Activated CD8-positive, alpha-beta T cell treated with anti-CD3 and anti-CD28 coated beads for 36 hours (primary cell): ENCODE measurements at regions of chr10 and their contacts with region 1.

Region 1: DNA sequence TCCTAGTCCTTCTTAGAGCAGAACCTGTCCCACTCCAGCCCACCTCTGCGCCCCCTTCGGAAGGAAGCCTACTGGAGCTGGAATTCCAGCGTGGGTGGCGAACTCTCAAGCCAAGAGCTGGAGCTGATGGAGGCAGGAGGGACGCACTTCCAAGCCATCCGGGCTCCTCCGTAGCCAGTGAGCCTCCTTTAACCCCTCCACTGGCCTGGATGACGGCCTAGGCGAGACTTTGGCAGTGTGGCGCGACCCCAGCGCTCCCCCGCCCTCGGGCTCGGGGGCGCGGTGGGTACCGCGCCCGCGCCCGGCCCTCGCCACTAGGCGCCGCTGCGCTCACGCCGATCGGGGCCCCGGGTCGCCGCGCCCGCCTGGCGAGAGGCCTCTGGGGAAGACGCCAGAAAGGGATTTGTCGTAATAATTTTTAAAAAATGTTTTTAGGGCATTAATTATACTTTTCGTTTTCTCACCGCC is 5.1 kb upstream of the EMX2 start:
- DNase-seq: no peak
- ATAC-seq: no peak
- H3K4me3 Mint-ChIP-seq: no peak overlapping the region
- H3K27ac Mint-ChIP-seq: no peak overlapping the region
- H3K4me1 Mint-ChIP-seq: peaks cover 11% of the 10 kb centered on the region
- H3K27me3 Mint-ChIP-seq: peaks cover 66% of the 10 kb centered on the region
- CTCF ChIP-seq: peak; percentile 79

Region 2: DNA sequence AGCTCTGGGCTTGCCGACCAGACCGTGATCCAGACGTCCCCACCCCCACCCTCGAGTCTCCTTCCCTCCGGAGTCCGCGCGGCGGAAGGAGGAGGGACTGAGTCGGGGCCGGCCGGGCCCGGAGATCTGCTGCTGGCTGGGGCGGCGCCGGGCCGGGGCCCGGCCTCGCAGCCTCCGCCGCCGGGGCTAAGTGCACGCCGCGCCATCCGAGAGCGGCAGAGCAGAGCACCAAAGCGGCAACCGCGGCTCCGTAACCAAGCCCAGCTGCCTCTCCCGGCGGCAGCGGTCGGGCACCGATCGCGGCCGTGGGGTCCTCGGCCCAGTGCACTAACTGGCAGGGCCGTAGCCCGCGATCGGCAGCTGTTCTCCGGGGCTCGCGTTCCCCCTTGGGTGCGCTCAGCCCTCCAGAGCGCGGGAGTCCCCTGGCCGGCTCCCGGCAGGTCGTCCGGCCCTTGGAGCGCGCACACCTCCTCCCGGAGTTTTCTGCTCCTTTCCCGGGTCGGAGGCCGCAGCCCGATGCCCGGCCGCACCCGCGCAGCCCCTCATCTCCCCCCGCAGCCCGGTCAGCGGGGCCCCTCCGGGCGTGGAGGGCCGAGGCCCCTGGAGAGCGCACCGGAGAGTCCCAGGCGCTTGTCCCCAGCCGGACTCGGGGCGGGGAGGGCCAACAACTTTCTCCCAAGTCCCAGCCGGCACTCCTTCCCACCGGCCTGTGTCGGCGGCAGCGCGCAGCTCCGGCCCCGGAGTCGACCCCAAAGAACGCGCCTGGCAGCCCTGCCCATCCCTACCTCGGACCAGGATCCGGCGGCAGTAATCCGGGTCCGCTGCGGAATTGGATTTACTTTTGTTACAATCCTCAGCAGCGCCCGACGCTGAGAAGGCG is 400.2 kb before region 1 on chr10:
- CTCF ChIA-PET with region 1: no interaction called
- POLR2A ChIA-PET with region 1: no interaction called
- intact Hi-C with region 1: loop called (anchors 10 kb)
- DNase-seq: peak; percentile 14
- ATAC-seq: peak; percentile 17
- H3K4me3 Mint-ChIP-seq: no peak overlapping the region
- H3K27ac Mint-ChIP-seq: no peak overlapping the region
- H3K4me1 Mint-ChIP-seq: peaks cover 16% of the 10 kb centered on the region
- H3K27me3 Mint-ChIP-seq: peaks cover 66% of the 10 kb centered on the region
- CTCF ChIP-seq: no peak

Region 3: DNA sequence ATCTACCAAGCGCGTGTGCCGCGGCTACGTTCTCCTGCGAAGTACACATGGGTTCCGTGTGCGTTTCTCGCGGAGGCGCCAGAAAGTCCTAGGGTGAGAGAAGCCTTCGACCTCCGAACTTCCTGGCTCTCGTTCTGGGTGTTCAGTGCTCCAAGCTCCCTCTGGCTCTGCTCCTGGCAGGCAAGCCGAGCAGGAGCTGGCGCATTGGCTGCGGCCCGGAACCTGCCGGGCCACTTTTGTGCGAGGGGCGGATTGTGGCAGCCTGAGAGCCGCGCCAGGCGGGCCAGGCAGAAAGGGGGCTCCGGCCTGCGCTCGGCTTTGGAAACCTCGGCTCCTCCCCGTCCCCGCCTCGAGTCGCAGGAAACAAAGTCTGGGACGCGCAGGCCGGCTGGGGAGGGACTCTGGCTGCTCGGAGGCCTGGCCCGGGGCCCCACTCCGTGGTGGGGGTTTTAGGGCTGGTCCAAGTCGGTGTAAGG is 14.7 kb after region 1 on chr10:
- CTCF ChIA-PET with region 1: interaction called, 6 read pairs
- POLR2A ChIA-PET with region 1: no interaction called
- intact Hi-C with region 1: loop called (anchors 2 kb)
- DNase-seq: no peak
- ATAC-seq: no peak
- H3K4me3 Mint-ChIP-seq: no peak overlapping the region
- H3K27ac Mint-ChIP-seq: no peak overlapping the region
- H3K4me1 Mint-ChIP-seq: peaks cover 4% of the 10 kb centered on the region
- H3K27me3 Mint-ChIP-seq: peaks cover 77% of the 10 kb centered on the region
- CTCF ChIP-seq: no peak

Region 4: DNA sequence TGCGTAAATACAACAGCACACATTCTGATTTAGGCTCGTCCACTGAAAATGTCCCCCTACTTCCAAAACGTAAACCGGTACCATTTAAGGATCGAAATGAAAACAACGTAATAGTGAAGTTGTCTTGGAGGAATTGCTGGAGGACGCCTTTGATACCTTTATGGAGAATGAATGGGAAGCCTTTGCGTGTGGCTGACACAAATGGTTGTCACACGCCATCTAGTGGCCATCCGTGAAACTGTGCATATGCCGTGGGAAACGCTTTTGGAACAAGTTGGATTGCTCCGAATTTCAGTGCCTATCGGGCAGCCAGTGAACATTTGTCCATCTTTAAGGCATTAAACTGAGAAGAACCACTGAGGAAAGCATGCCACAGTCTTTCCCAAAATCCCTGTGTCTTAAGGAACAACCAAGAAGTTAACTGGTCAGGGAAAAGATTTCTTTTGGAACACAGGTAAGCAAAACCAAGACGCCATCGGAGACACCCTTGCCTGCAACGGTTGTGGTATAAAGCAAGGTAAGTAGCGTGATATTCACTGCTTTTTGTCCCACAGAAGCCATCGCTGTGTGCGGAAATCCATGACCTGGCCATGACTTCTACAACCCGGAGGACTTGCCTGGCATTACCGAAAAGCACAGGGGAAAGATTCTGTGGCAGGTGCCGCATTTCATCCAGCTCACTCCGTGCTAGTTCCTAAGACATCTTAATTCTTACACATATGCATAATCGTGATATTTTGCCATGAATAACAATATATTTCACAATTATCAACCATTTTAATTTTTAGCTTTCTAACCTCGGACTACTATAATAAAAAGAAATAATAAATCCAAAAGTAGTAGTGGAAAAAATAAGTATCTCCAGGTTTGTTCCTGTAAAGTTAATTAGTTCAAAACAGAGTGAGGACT is 704.0 kb after region 1 on chr10:
- CTCF ChIA-PET with region 1: interaction called, 5 read pairs
- POLR2A ChIA-PET with region 1: no interaction called
- intact Hi-C with region 1: loop called (anchors 5 kb)
- DNase-seq: peak; percentile 79
- ATAC-seq: no peak
- H3K4me3 Mint-ChIP-seq: no peak overlapping the region
- H3K27ac Mint-ChIP-seq: no peak overlapping the region
- H3K4me1 Mint-ChIP-seq: no peaks in the 10 kb centered on the region
- H3K27me3 Mint-ChIP-seq: peaks cover 35% of the 10 kb centered on the region
- CTCF ChIP-seq: peak; percentile 97